ENCODE measurements at regions of chr5 and their contacts with region 1.

Region 1: DNA sequence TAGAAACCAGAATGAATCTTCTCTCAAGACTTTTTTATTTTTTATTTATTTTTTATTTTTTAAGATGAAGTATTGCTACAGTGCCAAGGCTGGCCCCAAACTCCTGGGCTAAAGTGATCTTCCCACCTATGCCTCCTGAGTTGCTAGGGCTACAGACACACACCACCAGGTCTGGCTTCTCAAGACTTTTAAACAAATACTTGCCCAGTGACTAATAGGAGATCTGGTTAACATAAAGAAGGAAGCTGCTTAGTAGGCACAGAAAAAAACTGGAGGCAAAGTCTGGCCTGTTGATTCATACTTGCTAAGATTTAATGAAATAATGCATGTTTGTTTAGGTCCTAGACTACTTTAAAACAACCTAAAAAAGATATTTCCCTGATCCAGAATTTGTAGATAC is 43.8 kb downstream of the SLC38A9 start:
- DNase-seq: no peak
- H3K4me3 ChIP-seq: no peak overlapping the region
- H3K27ac ChIP-seq: no peak overlapping the region
- H3K4me1 ChIP-seq: no peaks in the 10 kb centered on the region
- H3K27me3 ChIP-seq: no peaks in the 10 kb centered on the region
- CTCF ChIP-seq: no peak
- POLR2A ChIP-seq: no peak

Region 2: DNA sequence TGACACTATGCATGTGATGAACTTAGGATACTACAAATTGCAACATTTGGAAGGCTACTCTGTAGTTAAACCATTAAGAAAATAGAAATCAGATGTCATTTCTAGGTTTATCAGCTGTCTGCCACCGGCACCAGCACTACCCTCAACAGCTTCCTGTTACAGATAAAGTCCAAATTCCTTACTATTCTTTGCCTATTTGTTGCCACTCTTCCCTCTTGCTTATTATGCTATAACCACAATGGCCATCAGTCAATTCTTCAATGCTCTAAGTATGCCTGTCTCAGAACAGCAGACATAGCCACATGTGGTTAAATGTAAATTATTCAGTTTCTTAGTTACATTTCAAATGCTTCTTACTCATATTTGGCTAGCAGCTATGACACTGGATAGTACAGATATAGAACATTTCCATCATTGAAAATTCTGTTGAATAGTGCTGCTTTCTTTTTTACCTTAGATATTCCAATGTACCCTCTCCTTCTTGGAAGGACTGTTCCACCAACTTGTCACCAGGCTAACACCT is 381.9 kb before region 1 on chr5:
- intact Hi-C with region 1: no loop called
- DNase-seq: no peak
- H3K4me3 ChIP-seq: no peak overlapping the region
- H3K27ac ChIP-seq: no peak overlapping the region
- H3K4me1 ChIP-seq: no peaks in the 10 kb centered on the region
- H3K27me3 ChIP-seq: no peaks in the 10 kb centered on the region
- CTCF ChIP-seq: no peak
- POLR2A ChIP-seq: no peak

Region 3: GRCh38 chr5:57193757-57194413 is 1525.5 kb after region 1 on chr5:
- intact Hi-C with region 1: loop called (anchors 5 kb)
- DNase-seq: no peak
- H3K4me3 ChIP-seq: no peak overlapping the region
- H3K27ac ChIP-seq: no peak overlapping the region
- H3K4me1 ChIP-seq: no peaks in the 10 kb centered on the region
- H3K27me3 ChIP-seq: no peaks in the 10 kb centered on the region
- CTCF ChIP-seq: no peak
- POLR2A ChIP-seq: no peak

Measured in breast epithelium (tissue), 4 donors.